ENCODE measurements at regions of chr9 and their contacts with region 1.

Region 1: DNA sequence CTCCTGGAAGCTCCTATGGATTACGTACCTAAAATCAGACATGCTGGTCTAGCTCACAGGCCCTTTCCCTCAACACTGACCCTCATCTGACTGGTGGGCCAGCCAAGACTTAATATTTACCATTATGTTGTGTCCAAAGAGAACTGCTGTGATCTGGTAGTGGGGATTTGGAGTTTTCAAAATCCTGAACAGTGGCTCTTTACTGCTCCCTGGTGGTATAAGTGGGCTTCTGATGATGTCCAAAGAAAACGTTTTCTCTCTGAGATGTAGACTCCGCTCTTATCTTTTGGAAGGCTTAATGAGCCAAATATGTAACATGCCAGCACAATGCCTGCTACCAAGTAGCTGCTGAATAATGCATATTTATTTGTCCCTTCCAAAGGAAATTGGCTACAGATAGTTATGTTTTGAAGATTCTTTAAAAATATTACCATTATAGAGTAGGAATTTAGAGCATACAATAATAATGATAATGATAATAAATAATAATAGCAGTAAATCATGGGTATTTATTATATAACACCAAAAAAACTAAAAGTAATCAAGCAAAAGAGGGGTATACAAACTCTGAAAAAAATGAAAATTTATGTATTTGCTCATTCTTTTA is 406.6 kb upstream of the TNC start:
- DNase-seq: peak; percentile 95
- H3K4me3 ChIP-seq: no peak overlapping the region
- H3K27ac ChIP-seq: peak overlapping the region; percentile 68
- H3K4me1 ChIP-seq: peaks cover 21% of the 10 kb centered on the region
- H3K27me3 ChIP-seq: no peaks in the 10 kb centered on the region
- CTCF ChIP-seq: peak; percentile 89

Region 2: DNA sequence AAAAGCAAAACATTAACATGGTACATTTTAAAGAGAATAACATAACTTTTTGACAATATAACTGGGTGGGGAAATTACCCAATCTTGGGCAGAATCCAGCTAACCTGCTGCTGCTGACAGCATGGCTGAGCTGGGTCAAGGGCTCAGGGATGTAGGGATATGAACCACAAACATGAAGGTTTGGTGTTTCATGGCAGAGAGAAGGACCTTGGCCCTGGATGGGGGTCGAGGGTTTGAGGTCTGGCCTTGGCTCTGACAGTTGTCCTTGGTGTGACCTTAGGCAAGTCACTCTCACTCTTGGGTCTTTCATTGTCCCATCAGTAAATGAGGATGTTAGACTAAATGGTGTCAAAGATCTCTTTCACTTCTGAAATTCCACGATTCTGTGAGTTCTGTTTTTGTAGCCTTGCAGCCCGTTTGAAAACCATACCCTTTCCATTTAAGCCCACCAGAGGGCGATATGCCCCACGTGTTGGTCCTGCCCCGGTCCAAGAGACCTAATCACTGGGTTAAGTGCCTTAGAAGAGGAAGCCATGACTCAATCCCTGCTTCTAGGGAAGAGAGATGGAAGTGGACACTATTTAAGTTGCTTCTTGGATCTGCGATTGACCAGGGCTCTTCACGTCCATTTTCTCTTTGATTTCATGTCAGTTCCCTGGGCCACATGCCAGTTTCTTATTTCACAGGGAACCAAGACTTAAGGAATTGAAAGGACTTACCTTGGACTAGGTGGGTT is 785.8 kb before region 1 on chr9:
- CTCF ChIA-PET with region 1: no interaction called
- POLR2A ChIA-PET with region 1: no interaction called
- intact Hi-C with region 1: loop called (anchors 5 kb)
- DNase-seq: peak; percentile 82
- H3K4me3 ChIP-seq: no peak overlapping the region
- H3K27ac ChIP-seq: no peak overlapping the region
- H3K4me1 ChIP-seq: peaks cover 13% of the 10 kb centered on the region
- H3K27me3 ChIP-seq: no peaks in the 10 kb centered on the region
- CTCF ChIP-seq: peak; percentile 86

Region 3: DNA sequence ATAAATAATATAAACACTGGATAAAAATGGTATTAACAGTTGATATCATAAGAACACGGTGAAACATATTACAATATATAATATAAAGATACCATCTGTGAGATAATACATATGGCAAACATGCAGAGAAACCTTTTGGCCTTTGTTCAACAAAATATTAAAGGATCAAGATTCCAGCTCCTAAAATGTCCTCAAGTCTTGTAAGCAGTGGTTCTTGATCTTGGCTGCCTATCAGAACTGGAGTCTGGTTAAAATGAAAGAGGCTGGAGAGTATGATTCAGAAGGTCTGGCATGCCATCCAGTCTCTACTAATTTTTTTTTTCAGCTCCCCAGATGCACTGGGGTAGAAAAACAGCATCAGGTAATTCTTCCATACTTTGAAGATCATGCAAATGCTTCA is 489.8 kb before region 1 on chr9:
- CTCF ChIA-PET with region 1: no interaction called
- POLR2A ChIA-PET with region 1: no interaction called
- intact Hi-C with region 1: loop called (anchors 5 kb)
- DNase-seq: no peak
- H3K4me3 ChIP-seq: no peak overlapping the region
- H3K27ac ChIP-seq: peak overlapping the region; percentile 70
- H3K4me1 ChIP-seq: peaks cover 17% of the 10 kb centered on the region
- H3K27me3 ChIP-seq: no peaks in the 10 kb centered on the region
- CTCF ChIP-seq: no peak

Region 4: DNA sequence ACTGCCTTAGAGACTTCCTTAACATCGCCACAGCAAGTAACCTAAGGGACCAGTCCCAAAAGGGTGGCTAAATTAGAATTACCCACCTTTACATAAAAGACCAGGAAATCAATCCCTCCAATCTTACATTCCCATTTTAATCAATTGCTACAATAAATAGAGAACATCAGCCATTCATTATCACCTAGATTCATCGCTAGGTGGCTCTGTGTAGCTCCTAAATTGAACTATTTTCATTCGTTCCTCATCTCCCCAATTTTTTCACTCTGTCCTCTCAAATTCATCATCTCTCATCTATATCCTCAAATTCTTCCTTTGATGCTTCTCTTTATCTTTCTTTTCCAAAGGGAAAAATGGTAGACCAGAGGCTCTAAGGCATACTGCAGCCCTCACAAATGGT is 298.4 kb before region 1 on chr9:
- CTCF ChIA-PET with region 1: no interaction called
- POLR2A ChIA-PET with region 1: no interaction called
- intact Hi-C with region 1: loop called (anchors 5 kb)
- DNase-seq: no peak
- H3K4me3 ChIP-seq: no peak overlapping the region
- H3K27ac ChIP-seq: no peak overlapping the region
- H3K4me1 ChIP-seq: peaks cover 23% of the 10 kb centered on the region
- H3K27me3 ChIP-seq: no peaks in the 10 kb centered on the region
- CTCF ChIP-seq: peak; percentile 45

Region 5: DNA sequence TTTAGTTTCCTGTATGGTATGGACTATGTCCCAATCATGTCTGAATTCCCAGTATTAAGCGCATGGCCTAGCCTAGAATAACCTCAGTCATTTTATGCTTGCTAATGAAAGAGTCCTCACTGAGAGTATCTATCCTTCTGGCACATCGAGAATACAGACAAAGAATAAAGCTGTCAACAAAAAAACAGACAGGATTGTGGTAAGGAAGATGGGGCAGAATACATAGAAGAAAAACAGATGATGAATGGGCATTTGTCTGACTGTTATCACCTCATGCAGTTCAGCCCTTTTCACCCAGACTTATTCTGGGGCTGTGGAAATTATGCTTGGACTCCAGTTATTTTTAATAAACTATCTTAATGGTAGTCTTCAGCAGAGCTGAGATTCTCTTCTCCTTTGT is 42.8 kb before region 1 on chr9:
- CTCF ChIA-PET with region 1: no interaction called
- POLR2A ChIA-PET with region 1: no interaction called
- intact Hi-C with region 1: no loop called
- DNase-seq: no peak
- H3K4me3 ChIP-seq: no peak overlapping the region
- H3K27ac ChIP-seq: no peak overlapping the region
- H3K4me1 ChIP-seq: no peaks in the 10 kb centered on the region
- H3K27me3 ChIP-seq: no peaks in the 10 kb centered on the region
- CTCF ChIP-seq: no peak

Region 6: GRCh38 chr9:116405321-116405720 is 880.8 kb after region 1 on chr9:
- CTCF ChIA-PET with region 1: no interaction called
- POLR2A ChIA-PET with region 1: no interaction called
- intact Hi-C with region 1: no loop called
- DNase-seq: no peak
- H3K4me3 ChIP-seq: no peak overlapping the region
- H3K27ac ChIP-seq: no peak overlapping the region
- H3K4me1 ChIP-seq: peaks cover 2% of the 10 kb centered on the region
- H3K27me3 ChIP-seq: no peaks in the 10 kb centered on the region
- CTCF ChIP-seq: no peak